ENCODE measurements at regions of chr11 and their contacts with region 1.

Region 1: GRCh38 chr11:44634401-44635281 is 69.2 kb downstream of the CD82 start:
- DNase-seq: peak; percentile 79 to 92 (median 82)
- ATAC-seq: peak; percentile 72 to 88 (median 80)
- H3K4me3 ChIP-seq: peak overlapping the region in 2 of 12 donors; percentile 2 to 24
- H3K27ac ChIP-seq: peak overlapping the region in 2 of 12 donors; percentile 10 to 15
- H3K4me1 ChIP-seq: peaks cover 7 to 40% (median 29%) of the 10 kb centered on the region in 12 donors
- H3K27me3 ChIP-seq: no peaks in the 10 kb centered on the region
- CTCF ChIP-seq: peak in 1 of 12 donors; percentile 14
- POLR2A ChIP-seq: no peak

Region 2: GRCh38 chr11:44702889-44703288 is 68.2 kb after region 1 on chr11:
- intact Hi-C with region 1: loop called in 3 of 10 experiments (anchors 2 to 5 kb)
- DNase-seq: no peak
- ATAC-seq: peak; percentile 21 to 42 (median 24)
- H3K4me3 ChIP-seq: no peak overlapping the region
- H3K27ac ChIP-seq: peak overlapping the region in 4 of 12 donors; percentile 40 to 71 (median 58)
- H3K4me1 ChIP-seq: peaks cover 6 to 41% (median 17%) of the 10 kb centered on the region in 12 donors
- H3K27me3 ChIP-seq: no peaks in the 10 kb centered on the region
- CTCF ChIP-seq: no peak
- POLR2A ChIP-seq: no peak

Region 3: GRCh38 chr11:44766112-44766971 is 131.7 kb after region 1 on chr11:
- intact Hi-C with region 1: loop called in 3 of 10 experiments (anchors 5 to 10 kb)
- DNase-seq: peak; percentile 77 to 92 (median 77)
- ATAC-seq: peak; percentile 85 to 90 (median 86)
- H3K4me3 ChIP-seq: no peak overlapping the region
- H3K27ac ChIP-seq: peak overlapping the region; percentile 63 to 96 (median 90)
- H3K4me1 ChIP-seq: peaks cover 11 to 83% (median 60%) of the 10 kb centered on the region in 12 donors
- H3K27me3 ChIP-seq: no peaks in the 10 kb centered on the region
- CTCF ChIP-seq: peak in 2 of 12 donors; percentile 10 to 23
- POLR2A ChIP-seq: no peak